ENCODE measurements at regions of chr2 and their contacts with region 1.

Region 1: GRCh38 chr2:196295005-196295404 is 123.6 kb upstream of the STK17B start:
- DNase-seq: no peak
- H3K4me3 ChIP-seq: no peak overlapping the region
- H3K27ac ChIP-seq: no peak overlapping the region
- H3K4me1 ChIP-seq: no peaks in the 10 kb centered on the region
- H3K27me3 ChIP-seq: no peaks in the 10 kb centered on the region
- CTCF ChIP-seq: no peak

Region 2: GRCh38 chr2:195270466-195271039 is 1024.5 kb before region 1 on chr2:
- intact Hi-C with region 1: no loop called
- DNase-seq: no peak
- H3K4me3 ChIP-seq: no peak overlapping the region
- H3K27ac ChIP-seq: no peak overlapping the region
- H3K4me1 ChIP-seq: no peaks in the 10 kb centered on the region
- H3K27me3 ChIP-seq: no peaks in the 10 kb centered on the region
- CTCF ChIP-seq: no peak

Region 3: GRCh38 chr2:196066291-196067087 is 228.5 kb before region 1 on chr2:
- intact Hi-C with region 1: no loop called
- DNase-seq: no peak
- H3K4me3 ChIP-seq: no peak overlapping the region
- H3K27ac ChIP-seq: no peak overlapping the region
- H3K4me1 ChIP-seq: peaks cover 3% of the 10 kb centered on the region
- H3K27me3 ChIP-seq: no peaks in the 10 kb centered on the region
- CTCF ChIP-seq: peak; percentile 72

Region 4: GRCh38 chr2:196337208-196337953 is 42.4 kb after region 1 on chr2:
- intact Hi-C with region 1: loop called (anchors 5 kb)
- DNase-seq: no peak
- H3K4me3 ChIP-seq: no peak overlapping the region
- H3K27ac ChIP-seq: no peak overlapping the region
- H3K4me1 ChIP-seq: no peaks in the 10 kb centered on the region
- H3K27me3 ChIP-seq: no peaks in the 10 kb centered on the region
- CTCF ChIP-seq: peak; percentile 36

Region 5: GRCh38 chr2:196453613-196454047 is 158.6 kb after region 1 on chr2:
- intact Hi-C with region 1: loop called (anchors 5 kb)
- DNase-seq: peak; percentile 43
- H3K4me3 ChIP-seq: no peak overlapping the region
- H3K27ac ChIP-seq: no peak overlapping the region
- H3K4me1 ChIP-seq: no peaks in the 10 kb centered on the region
- H3K27me3 ChIP-seq: no peaks in the 10 kb centered on the region
- CTCF ChIP-seq: peak; percentile 28

Measured in colonic mucosa (tissue), 4 donors.